ENCODE measurements at regions of chr17 and their contacts with region 1.

Region 1: GRCh38 chr17:7745748-7746470 is 28.4 kb downstream of the DNAH2 start:
- DNase-seq: no peak
- ATAC-seq: no peak
- H3K4me3 ChIP-seq: no peak overlapping the region
- H3K27ac ChIP-seq: no peak overlapping the region
- H3K4me1 ChIP-seq: no peaks in the 10 kb centered on the region
- H3K27me3 ChIP-seq: no peaks in the 10 kb centered on the region; a peak in 3 of 4 replicates
- CTCF ChIP-seq: no peak
- EP300 ChIP-seq: no peak
- POLR2A ChIP-seq: no peak
- RAD21 ChIP-seq: no peak

Region 2: DNA sequence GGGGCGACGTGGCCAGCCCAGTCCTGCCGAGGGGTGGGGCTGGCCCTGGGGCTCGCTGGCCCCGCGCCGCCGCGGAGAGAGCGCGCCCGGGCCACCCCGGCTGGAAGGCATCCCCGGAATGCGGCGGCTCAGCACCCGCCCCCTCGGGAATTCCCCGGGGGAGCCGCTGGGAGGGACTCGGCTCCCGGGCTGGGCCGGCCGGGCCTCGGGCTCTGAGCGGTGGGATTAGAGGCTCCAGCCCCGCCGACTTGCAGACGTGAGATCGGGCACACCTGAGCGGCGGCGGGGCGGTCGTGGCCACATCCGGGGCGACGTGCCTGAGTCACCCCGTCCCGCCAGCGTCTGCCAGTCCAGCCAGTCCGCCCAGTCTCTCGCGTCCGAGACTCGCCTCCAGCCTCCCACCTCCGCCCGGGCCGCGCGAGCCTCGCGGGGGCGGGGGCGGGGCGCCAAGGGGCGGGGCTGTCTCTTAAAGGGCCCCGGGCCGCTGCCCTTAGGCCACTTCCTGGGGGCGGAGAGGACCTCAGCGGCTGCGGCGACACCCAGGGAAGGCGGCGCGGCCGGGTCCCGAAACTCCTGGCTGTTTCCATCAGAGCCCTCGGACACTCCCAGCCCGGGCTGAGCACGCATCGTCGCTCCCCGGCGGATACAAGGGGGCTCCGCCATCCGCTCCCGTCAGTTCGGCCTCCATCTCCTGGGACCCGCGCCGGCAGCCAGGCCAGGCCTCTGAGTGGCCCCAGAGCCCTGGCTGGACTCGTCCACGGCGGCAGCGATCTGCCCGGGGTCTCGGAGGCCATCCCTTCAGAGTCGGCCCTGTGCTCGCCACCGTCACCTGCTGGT is 394.0 kb before region 1 on chr17 and contains the start of gene KCTD11:
- CTCF ChIA-PET with region 1: no interaction called
- POLR2A ChIA-PET with region 1: no interaction called
- RAD21 ChIA-PET with region 1: no interaction called
- SMC1A ChIA-PET with region 1: no interaction called
- in situ Hi-C with region 1: no loop called
- intact Hi-C with region 1: no loop called
- DNase-seq: no peak
- ATAC-seq: peak; percentile 81
- H3K4me3 ChIP-seq: peak within 1 kb of the TSS; percentile 88
- H3K27ac ChIP-seq: peak within 1 kb of the TSS; percentile 59
- H3K4me1 ChIP-seq: peaks cover 23% of the 10 kb centered on the region
- H3K27me3 ChIP-seq: no peaks in the 10 kb centered on the region
- CTCF ChIP-seq: peak in 2 of 3 experiments; percentile 55 to 59; a peak in 3 of 6 replicates
- EP300 ChIP-seq: no peak
- POLR2A ChIP-seq: peak; percentile 81
- RAD21 ChIP-seq: 0 out of 2 replicates have a peak, but pooled peaks have one; percentile 27
- polyA plus RNA-seq, gene KCTD11: 0.05 to 0.09 TPM

Region 3: GRCh38 chr17:7729816-7730215 is 16.1 kb before region 1 on chr17:
- CTCF ChIA-PET with region 1: interaction called, 13 read pairs
- POLR2A ChIA-PET with region 1: interaction called, 5 read pairs
- RAD21 ChIA-PET with region 1: interaction called, 3 read pairs
- SMC1A ChIA-PET with region 1: interaction called, 4 read pairs
- in situ Hi-C with region 1: no loop called
- intact Hi-C with region 1: no loop called
- DNase-seq: no peak
- ATAC-seq: no peak
- H3K4me3 ChIP-seq: no peak overlapping the region
- H3K27ac ChIP-seq: no peak overlapping the region
- H3K4me1 ChIP-seq: no peaks in the 10 kb centered on the region
- H3K27me3 ChIP-seq: peaks cover 0 to 3% of the 10 kb centered on the region in 2 experiments; a peak in 2 of 4 replicates
- CTCF ChIP-seq: no peak
- EP300 ChIP-seq: no peak
- POLR2A ChIP-seq: no peak
- RAD21 ChIP-seq: no peak

Region 4: GRCh38 chr17:7782237-7782636 is 36.3 kb after region 1 on chr17:
- CTCF ChIA-PET with region 1: interaction called, 19 read pairs
- POLR2A ChIA-PET with region 1: no interaction called
- RAD21 ChIA-PET with region 1: interaction called, 14 read pairs
- SMC1A ChIA-PET with region 1: interaction called, 3 read pairs
- in situ Hi-C with region 1: no loop called
- intact Hi-C with region 1: no loop called
- DNase-seq: no peak
- ATAC-seq: no peak
- H3K4me3 ChIP-seq: no peak overlapping the region
- H3K27ac ChIP-seq: no peak overlapping the region
- H3K4me1 ChIP-seq: peaks cover 8% of the 10 kb centered on the region
- H3K27me3 ChIP-seq: peaks cover 1 to 4% of the 10 kb centered on the region in 2 experiments
- CTCF ChIP-seq: no peak
- EP300 ChIP-seq: no peak
- POLR2A ChIP-seq: no peak
- RAD21 ChIP-seq: 0 out of 2 replicates have a peak, but pooled peaks have one; percentile 1

Region 5: GRCh38 chr17:7834962-7835813 is 89.3 kb after region 1 on chr17:
- CTCF ChIA-PET with region 1: interaction called, 11 read pairs
- POLR2A ChIA-PET with region 1: interaction called, 3 read pairs
- RAD21 ChIA-PET with region 1: interaction called, 4 read pairs
- SMC1A ChIA-PET with region 1: interaction called, 5 read pairs
- in situ Hi-C with region 1: no loop called
- intact Hi-C with region 1: no loop called
- DNase-seq: peak; percentile 90
- ATAC-seq: peak; percentile 60
- H3K4me3 ChIP-seq: peak overlapping the region; percentile 100
- H3K27ac ChIP-seq: peak overlapping the region; percentile 76
- H3K4me1 ChIP-seq: peaks cover 21% of the 10 kb centered on the region
- H3K27me3 ChIP-seq: peaks cover 0 to 1% of the 10 kb centered on the region in 2 experiments; a peak in 1 of 4 replicates
- CTCF ChIP-seq: peak; percentile 82 to 87 (median 85)
- EP300 ChIP-seq: peak in 1 of 2 experiments; percentile 35; a peak in 1 of 4 replicates
- POLR2A ChIP-seq: no peak
- RAD21 ChIP-seq: peak; percentile 78

Region 6: DNA sequence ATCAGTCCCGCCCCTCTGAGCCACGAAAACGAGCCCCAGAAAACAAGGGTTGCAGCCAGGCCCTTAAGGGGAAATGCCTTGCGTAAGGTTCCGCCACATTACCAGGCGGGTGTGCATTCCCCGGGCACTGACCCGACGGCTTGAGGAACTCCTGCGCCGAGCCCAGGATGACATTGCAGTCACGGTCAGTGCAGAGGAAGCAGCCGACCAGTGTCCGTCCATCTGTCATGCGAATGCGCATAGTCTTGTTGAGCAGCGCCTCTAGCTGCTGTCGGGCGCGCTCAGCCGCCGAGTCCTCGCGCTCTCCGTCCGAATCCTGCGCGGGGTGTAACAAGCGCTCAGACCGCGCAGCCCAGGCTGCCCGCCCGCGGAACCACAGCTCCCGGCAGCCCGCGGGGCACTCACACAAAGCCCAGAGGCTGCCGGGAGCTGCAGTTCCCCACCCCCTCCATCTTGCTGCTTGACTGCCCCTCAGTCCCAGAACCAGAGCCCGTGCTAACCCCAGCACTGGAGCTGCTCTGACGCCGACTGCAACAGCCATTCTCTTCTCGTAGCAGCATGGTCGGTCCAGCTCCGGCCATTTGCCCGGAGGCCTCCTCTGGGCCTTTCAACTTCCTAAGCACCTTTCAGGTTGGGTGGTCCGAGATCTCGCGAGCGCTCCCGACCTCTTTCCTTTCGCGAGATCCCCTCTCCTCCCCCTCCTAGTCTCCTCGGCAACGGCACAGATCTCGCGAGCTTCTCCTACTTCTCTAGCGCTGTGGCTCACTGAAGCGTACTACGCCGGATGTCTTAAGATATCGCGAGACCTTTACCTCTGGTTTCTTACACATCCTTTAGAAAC is 111.2 kb after region 1 on chr17 and contains the start of gene NAA38:
- CTCF ChIA-PET with region 1: interaction called, 22 read pairs
- POLR2A ChIA-PET with region 1: no interaction called
- RAD21 ChIA-PET with region 1: interaction called, 7 read pairs
- SMC1A ChIA-PET with region 1: interaction called, 3 read pairs
- in situ Hi-C with region 1: no loop called
- intact Hi-C with region 1: loop called (anchors 2 kb)
- DNase-seq: peak; percentile 100
- ATAC-seq: peak; percentile 91
- H3K4me3 ChIP-seq: peak within 1 kb of the TSS; percentile 96
- H3K27ac ChIP-seq: peak within 1 kb of the TSS; percentile 96
- H3K4me1 ChIP-seq: peaks cover 18% of the 10 kb centered on the region
- H3K27me3 ChIP-seq: no peaks in the 10 kb centered on the region
- CTCF ChIP-seq: peak in 2 of 3 experiments; percentile 48 to 69; a peak in 5 of 6 replicates
- EP300 ChIP-seq: no peak; a peak in 1 of 4 replicates
- POLR2A ChIP-seq: peak; percentile 76
- RAD21 ChIP-seq: no peak
- polyA plus RNA-seq, gene NAA38: 206 to 231 TPM

Region 7: DNA sequence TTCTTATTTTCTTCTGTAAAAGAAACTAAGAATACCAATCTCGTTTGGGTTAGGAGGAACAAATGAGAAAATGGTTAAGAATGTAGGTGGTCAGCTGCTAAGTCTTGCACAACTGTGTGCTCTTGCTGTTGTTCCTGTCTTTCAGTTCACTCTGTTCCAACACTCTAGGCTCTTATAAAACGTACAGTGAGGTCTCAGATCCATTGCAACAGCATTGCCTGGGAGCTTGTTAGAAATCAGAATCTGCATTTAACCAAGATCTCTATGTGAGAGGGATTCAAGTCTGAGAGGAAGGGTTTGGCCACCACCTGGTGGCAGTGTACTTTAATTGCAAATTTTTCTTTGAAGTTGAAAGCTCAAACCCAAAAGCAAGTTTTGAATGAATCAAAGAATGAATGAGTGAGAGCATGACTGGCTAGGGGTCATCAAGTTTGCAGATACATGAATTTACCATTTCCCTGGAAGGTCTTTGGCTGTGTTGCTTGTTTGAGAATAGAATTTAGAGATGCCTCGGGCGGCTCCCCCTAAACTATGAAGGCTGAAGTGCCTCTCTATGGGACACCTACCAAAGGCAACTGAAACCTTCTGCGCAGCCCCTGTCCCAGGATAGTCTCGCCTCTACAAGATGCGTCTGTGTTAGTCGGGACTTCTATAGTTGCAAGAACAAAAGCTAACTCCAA is 295.5 kb after region 1 on chr17:
- CTCF ChIA-PET with region 1: interaction called, 20 read pairs
- POLR2A ChIA-PET with region 1: no interaction called
- RAD21 ChIA-PET with region 1: interaction called, 6 read pairs
- SMC1A ChIA-PET with region 1: interaction called, 15 read pairs
- in situ Hi-C with region 1: no loop called
- intact Hi-C with region 1: loop called (anchors 5 kb)
- DNase-seq: no peak
- ATAC-seq: peak; percentile 80
- H3K4me3 ChIP-seq: no peak overlapping the region
- H3K27ac ChIP-seq: no peak overlapping the region
- H3K4me1 ChIP-seq: no peaks in the 10 kb centered on the region
- H3K27me3 ChIP-seq: peaks cover 0 to 3% of the 10 kb centered on the region in 2 experiments; a peak in 2 of 4 replicates
- CTCF ChIP-seq: peak; percentile 54 to 79 (median 67); a peak in 5 of 6 replicates
- EP300 ChIP-seq: no peak
- POLR2A ChIP-seq: no peak
- RAD21 ChIP-seq: peak; percentile 78

Region 8: DNA sequence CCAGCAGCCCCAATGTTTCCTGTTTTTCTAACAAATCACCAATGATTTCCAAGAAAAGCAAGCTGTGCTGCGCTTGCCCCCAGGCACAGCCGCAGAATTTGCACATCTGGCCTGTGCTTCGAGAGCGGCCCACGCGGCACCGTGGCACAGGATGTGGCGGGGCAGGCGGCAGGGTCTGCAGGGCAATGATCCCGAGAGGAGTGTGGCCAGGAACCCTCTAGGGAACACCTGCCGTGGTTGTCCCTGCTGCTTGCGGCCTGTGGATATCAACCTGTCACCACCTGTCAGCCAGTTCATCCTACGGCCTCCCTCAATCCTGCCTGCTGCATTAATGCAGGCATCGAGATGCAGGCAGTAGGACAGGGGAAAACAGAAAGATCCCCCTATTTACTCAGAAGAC is 1195.6 kb after region 1 on chr17:
- CTCF ChIA-PET with region 1: no interaction called
- POLR2A ChIA-PET with region 1: no interaction called
- RAD21 ChIA-PET with region 1: no interaction called
- SMC1A ChIA-PET with region 1: no interaction called
- in situ Hi-C with region 1: no loop called
- intact Hi-C with region 1: no loop called
- DNase-seq: no peak
- ATAC-seq: peak; percentile 68
- H3K4me3 ChIP-seq: peak overlapping the region; percentile 15; the same call in 1 of the 2 replicates
- H3K27ac ChIP-seq: peak overlapping the region; percentile 94
- H3K4me1 ChIP-seq: peaks cover 45% of the 10 kb centered on the region
- H3K27me3 ChIP-seq: no peaks in the 10 kb centered on the region
- CTCF ChIP-seq: no peak
- EP300 ChIP-seq: peak; percentile 61 to 82
- POLR2A ChIP-seq: 0 out of 2 replicates have a peak, but pooled peaks have one; percentile 13
- RAD21 ChIP-seq: no peak

Measured in GM12878 (cell line).